ENCODE measurements at regions of chr12 and their contacts with region 1.

Region 1: DNA sequence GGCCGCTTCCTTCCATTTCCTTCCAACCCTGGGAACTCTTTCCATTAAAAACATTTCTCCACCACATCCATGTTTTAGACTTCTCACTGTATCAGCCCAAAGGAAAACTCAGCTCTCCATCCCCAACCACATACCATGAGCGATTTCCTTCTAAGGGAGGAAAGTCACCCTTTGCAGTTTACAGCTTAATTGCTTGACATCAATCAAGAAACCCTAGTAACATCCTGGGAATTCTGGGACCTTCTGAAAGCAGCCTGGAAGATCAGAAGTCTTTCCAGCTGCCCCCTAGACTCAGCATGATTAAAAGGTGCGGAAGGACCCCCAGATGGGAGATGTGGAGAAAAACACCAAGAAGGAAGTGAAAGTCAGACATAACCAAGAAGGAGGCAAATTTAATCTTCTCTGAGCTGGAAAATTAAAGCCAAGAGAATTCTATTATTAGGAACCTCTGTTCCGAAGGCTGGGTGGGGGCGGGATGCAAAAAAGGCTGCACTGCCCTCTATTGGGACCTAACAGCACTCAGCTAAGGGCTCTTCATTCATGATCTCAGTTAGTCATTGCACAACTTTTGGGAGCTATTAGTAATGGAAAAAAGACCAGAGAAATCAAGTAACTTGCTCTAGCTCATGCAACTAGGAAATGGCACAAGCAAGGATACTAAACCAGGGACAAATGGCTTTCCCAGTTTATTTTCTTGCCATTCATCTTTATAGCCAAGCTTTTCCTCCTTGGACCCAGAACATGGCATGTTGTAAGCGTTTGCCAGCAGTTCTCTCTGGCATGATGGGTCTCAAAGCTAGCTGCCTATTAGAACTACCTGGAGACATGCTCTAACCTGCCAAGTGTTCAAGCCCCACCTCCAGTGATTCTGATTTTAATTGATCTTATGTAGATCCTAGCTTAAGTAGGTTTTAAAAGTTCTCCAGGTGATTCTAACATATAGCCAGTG is 73.1 kb upstream of the PLXNC1 start:
- DNase-seq: peak in 1 of 2 experiments; percentile 35
- H3K4me3 ChIP-seq: no peak overlapping the region
- H3K4me3 Mint-ChIP-seq: no peak overlapping the region
- H3K27ac Mint-ChIP-seq: no peak overlapping the region
- H3K4me1 ChIP-seq: peaks cover 24% of the 10 kb centered on the region
- H3K4me1 Mint-ChIP-seq: peaks cover 29% of the 10 kb centered on the region
- H3K27me3 ChIP-seq: no peaks in the 10 kb centered on the region
- H3K27me3 Mint-ChIP-seq: no peaks in the 10 kb centered on the region
- CTCF ChIP-seq: peak; percentile 44 to 62

Region 2: DNA sequence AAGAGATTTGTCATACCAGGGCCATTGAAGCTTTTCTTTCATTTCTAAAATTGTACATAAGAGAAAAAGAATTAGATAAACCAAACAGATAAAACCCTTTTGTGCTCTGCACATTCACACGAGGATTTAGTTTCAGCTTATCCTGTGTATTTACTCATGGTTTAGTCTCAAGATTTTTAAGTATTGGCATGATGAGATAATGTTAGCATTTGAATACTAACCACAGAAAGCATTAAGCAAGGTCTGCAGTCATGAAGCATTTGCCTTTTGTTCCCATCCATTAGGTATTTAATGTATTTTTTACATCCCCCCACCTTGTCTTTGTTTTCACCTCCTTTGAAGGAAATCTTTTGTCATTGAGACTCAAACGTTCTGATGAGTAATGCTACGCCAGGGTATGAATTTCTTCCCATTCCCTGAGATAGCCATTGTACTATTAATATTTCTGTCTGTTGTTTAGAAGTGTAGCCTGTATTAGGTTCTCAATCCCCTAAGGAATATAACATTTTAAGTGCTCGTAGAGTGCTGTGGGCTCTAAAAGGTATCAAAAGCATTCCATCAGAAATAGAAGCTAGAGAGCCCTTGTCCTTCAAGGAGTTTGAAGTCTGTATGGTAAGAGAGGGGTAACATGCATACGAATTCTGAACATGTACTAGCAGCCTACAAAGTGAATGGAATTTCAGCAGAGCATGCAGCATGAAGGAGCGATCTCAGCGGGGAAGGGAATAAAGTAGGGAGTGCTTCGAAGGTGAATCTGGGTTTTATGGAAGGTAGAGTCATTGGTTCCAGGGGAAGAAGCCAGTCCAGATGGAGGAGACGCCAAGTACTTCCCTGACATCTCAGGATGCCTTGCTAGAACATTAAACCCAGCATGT is 375.7 kb before region 1 on chr12:
- CTCF ChIA-PET with region 1: no interaction called
- POLR2A ChIA-PET with region 1: no interaction called
- intact Hi-C with region 1: loop called (anchors 1 kb)
- DNase-seq: peak in 1 of 2 experiments; percentile 50
- H3K4me3 ChIP-seq: no peak overlapping the region
- H3K4me3 Mint-ChIP-seq: peak overlapping the region; percentile 79
- H3K27ac Mint-ChIP-seq: peak overlapping the region; percentile 93
- H3K4me1 ChIP-seq: peaks cover 52% of the 10 kb centered on the region
- H3K4me1 Mint-ChIP-seq: peaks cover 45% of the 10 kb centered on the region
- H3K27me3 ChIP-seq: no peaks in the 10 kb centered on the region
- H3K27me3 Mint-ChIP-seq: no peaks in the 10 kb centered on the region
- CTCF ChIP-seq: no peak

Region 3: DNA sequence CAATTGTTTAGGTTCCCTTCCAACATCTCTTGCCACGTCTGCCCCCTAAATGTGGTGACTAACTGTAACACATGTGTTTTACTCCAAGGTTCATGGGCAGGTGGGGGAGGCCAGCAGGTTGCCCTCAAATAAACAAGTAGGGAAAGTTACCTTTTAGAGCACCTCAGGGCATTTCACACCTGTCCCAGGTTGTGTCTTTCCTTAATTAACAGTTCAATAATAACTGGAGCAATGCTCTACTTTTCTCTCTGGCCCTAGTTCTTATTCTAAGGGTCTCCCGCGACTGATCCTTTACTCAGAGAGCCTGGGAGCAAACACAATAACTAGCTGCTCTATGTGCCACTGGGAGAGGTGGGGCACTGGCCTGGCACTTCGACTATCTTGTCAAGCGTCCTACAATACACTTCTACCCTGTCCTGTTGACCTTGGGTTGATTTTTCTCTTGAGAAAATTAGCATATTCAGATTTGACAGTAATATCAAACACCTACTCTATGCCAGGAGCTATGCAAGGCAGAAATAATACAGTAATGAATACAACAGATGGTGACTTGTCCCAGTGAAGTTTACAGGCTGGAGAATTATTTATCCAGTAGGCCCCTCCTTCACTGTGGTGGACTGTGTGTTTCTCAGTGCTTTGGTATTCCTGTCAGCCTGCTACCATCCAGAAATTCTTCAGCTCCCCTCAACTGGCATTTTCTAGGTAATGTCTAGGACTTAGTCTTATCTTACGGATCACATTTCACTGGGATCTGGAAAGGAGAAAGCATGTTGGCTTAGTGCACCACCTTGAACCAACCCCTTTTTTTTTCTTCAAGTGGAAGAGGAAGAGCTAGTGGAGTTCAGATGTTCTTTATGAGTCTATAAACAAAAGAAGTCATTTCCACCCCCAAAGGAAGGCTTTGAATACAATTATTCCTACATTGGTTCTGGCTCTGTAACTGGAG is 195.5 kb before region 1 on chr12:
- CTCF ChIA-PET with region 1: no interaction called
- POLR2A ChIA-PET with region 1: no interaction called
- intact Hi-C with region 1: loop called (anchors 10 kb)
- DNase-seq: no peak
- H3K4me3 ChIP-seq: no peak overlapping the region
- H3K4me3 Mint-ChIP-seq: no peak overlapping the region
- H3K27ac Mint-ChIP-seq: no peak overlapping the region
- H3K4me1 ChIP-seq: peaks cover 26% of the 10 kb centered on the region
- H3K4me1 Mint-ChIP-seq: peaks cover 5% of the 10 kb centered on the region
- H3K27me3 ChIP-seq: no peaks in the 10 kb centered on the region
- H3K27me3 Mint-ChIP-seq: no peaks in the 10 kb centered on the region
- CTCF ChIP-seq: no peak

Region 4: GRCh38 chr12:93990832-93991803 is 84.1 kb before region 1 on chr12:
- CTCF ChIA-PET with region 1: interaction called, 7 read pairs
- POLR2A ChIA-PET with region 1: no interaction called
- intact Hi-C with region 1: loop called (anchors 5 kb)
- DNase-seq: peak; percentile 49 to 53
- H3K4me3 ChIP-seq: no peak overlapping the region
- H3K4me3 Mint-ChIP-seq: no peak overlapping the region
- H3K27ac Mint-ChIP-seq: no peak overlapping the region
- H3K4me1 ChIP-seq: no peaks in the 10 kb centered on the region
- H3K4me1 Mint-ChIP-seq: no peaks in the 10 kb centered on the region
- H3K27me3 ChIP-seq: no peaks in the 10 kb centered on the region
- H3K27me3 Mint-ChIP-seq: no peaks in the 10 kb centered on the region
- CTCF ChIP-seq: peak in 1 of 2 experiments; percentile 32

Region 5: DNA sequence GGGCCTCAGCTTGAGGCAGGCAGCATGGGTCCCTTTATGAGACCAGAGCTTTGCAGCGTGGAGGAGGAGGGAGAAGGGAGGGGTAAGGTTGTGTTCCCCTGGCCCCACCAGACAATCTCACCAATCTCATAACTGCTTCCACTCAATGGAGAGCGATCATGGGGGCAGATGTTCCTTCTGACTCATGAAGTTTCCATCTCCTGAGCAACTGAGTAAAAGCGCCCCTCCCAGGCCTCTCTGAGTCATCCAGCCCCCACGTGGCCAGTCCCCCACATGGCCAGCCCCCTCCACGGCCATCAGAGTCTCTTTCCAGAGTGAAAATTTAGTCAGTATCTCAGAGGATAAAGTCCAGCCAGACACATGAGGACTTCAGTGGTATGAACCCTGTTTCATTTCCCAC is 33.9 kb after region 1 on chr12:
- CTCF ChIA-PET with region 1: no interaction called
- POLR2A ChIA-PET with region 1: no interaction called
- intact Hi-C with region 1: no loop called
- DNase-seq: no peak
- H3K4me3 ChIP-seq: no peak overlapping the region
- H3K4me3 Mint-ChIP-seq: no peak overlapping the region
- H3K27ac Mint-ChIP-seq: no peak overlapping the region
- H3K4me1 ChIP-seq: 0 out of 2 replicates have a peak, but pooled peaks cover 5% of the 10 kb centered on the region
- H3K4me1 Mint-ChIP-seq: no peaks in the 10 kb centered on the region
- H3K27me3 ChIP-seq: no peaks in the 10 kb centered on the region
- H3K27me3 Mint-ChIP-seq: no peaks in the 10 kb centered on the region
- CTCF ChIP-seq: no peak